Heart left ventricle (tissue), 16 donors: ENCODE measurements at regions of chr11 and their contacts with region 1.

Region 1: DNA sequence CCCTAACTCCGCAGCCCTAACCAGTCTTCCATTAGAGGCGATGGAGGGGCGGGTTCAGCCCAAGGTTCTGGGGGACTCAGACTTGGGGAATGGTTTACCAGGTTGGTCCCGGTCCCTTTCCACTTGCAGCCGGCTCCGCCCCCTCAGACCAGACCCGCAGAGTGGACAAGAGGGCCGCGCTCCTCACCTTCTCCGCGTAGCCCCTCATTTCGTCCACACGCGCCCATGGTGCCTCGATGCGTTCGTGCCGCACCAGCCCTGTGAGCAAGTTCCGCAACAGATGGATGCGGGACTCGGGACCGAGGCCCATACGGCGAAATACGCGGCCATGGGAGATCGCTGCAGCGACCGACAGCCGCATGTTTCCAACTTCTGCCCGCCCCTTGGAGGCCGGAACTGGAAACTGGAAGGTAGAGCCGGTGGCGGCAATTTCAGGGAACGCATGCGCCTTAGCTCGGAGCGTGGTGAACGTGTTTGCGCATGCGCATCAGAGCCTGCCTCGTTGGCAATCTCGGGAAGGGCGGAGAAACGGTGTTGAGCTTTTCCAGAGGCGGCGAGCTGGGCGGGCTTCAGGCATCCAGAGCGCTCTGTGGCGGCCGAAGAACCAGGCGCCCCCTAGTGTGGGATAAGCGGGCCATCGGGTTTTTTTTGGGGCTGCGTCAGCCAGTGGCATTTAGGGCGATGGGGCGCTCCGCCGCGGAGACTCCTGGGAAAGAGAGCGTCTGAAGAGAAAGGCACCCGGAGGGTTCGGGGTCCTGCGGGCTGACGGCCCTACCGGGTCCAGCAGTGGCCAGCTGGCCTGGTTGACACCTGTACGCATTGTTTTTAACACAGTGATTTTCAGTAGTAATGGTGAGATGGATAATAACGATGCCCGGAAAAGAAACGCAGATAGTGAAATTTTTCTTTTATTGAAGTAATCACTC is at the start of gene MRPL17:
- DNase-seq: peak; percentile 99 to 100 (median 100)
- ATAC-seq: peak; percentile 98 to 99 (median 98)
- H3K4me3 ChIP-seq: peak within 1 kb of the TSS; percentile 64 to 96 (median 77)
- H3K27ac ChIP-seq: peak within 1 kb of the TSS; percentile 58 to 97 (median 90)
- H3K4me1 ChIP-seq: peaks cover 4 to 35% (median 19%) of the 10 kb centered on the region in 12 donors
- H3K27me3 ChIP-seq: no peaks in the 10 kb centered on the region
- CTCF ChIP-seq: peak; percentile 84 to 98 (median 92)
- POLR2A ChIP-seq: peak in 1 of 2 donors; percentile 89
- total RNA-seq, gene MRPL17: 31.0 to 58.0 (median 47.7) TPM

Region 2: GRCh38 chr11:6389921-6390724 is 293.1 kb before region 1 on chr11 and contains the start of gene SMPD1:
- intact Hi-C with region 1: loop called in 2 of 10 experiments (anchors 10 kb)
- DNase-seq: peak; percentile 95 to 97 (median 96)
- ATAC-seq: peak; percentile 96 to 98 (median 98)
- H3K4me3 ChIP-seq: peak within 1 kb of the TSS; percentile 62 to 97 (median 82)
- H3K27ac ChIP-seq: peak within 1 kb of the TSS; percentile 60 to 96 (median 90)
- H3K4me1 ChIP-seq: peaks cover 0 to 36% (median 19%) of the 10 kb centered on the region in 12 donors
- H3K27me3 ChIP-seq: no peaks in the 10 kb centered on the region
- CTCF ChIP-seq: no peak
- POLR2A ChIP-seq: peak; percentile 30 to 92
- total RNA-seq, gene SMPD1: 53.8 to 92.3 (median 67.8) TPM

Region 3: DNA sequence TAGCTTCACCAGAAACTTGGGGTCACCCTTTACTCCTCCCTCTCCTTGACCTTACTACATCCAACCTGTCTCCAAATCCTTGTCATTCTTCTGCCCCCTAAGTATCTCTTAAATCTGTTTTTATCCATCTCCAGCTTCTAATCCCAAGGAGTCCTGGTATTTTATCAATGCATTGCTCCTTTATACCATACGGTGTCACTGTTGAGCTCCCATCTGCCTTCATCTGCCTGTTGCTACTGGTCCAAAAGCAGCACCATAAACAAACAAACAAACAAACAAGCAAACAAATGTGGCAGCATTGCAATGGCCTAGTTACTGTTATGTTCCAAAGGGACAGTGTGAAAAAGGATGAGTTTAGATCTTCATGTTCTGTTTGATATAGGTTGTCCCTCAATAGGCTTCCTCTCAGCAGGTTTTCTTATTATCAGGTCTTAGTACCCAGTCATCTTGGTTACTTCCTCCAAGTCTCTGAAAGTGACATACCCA is 151.9 kb before region 1 on chr11:
- intact Hi-C with region 1: loop called in 8 of 10 experiments (anchors 2 to 5 kb)
- DNase-seq: no peak
- ATAC-seq: peak in 3 of 4 donors; percentile 49 to 55 (median 54)
- H3K4me3 ChIP-seq: no peak overlapping the region
- H3K27ac ChIP-seq: no peak overlapping the region
- H3K4me1 ChIP-seq: no peaks in the 10 kb centered on the region
- H3K27me3 ChIP-seq: no peaks in the 10 kb centered on the region
- CTCF ChIP-seq: peak; percentile 65 to 86 (median 79)
- POLR2A ChIP-seq: no peak

Region 4: GRCh38 chr11:6603287-6604080 is 79.7 kb before region 1 on chr11 and contains the starts of genes ILK and RRP8:
- intact Hi-C with region 1: loop called in 3 of 10 experiments (anchors 2 to 5 kb)
- DNase-seq: peak; percentile 94 to 96 (median 95)
- ATAC-seq: peak; percentile 73 to 92 (median 90)
- H3K4me3 ChIP-seq: peak within 1 kb of the TSS; percentile 52 to 97 (median 92)
- H3K27ac ChIP-seq: peak within 1 kb of the TSS; percentile 83 to 99 (median 98)
- H3K4me1 ChIP-seq: peaks cover 17 to 80% (median 58%) of the 10 kb centered on the region in 12 donors
- H3K27me3 ChIP-seq: no peaks in the 10 kb centered on the region
- CTCF ChIP-seq: peak in 8 of 12 donors; percentile 8 to 63 (median 38)
- POLR2A ChIP-seq: peak; percentile 54 to 86
- total RNA-seq, gene ILK: 177 to 259 (median 222) TPM
- total RNA-seq, gene RRP8: 11.2 to 23.5 (median 18.0) TPM

Region 5: GRCh38 chr11:6619004-6619745 is 64.0 kb before region 1 on chr11 and contains the start of gene TPP1:
- intact Hi-C with region 1: loop called in 4 of 10 experiments (anchors 5 kb)
- DNase-seq: peak; percentile 92 to 95 (median 94)
- ATAC-seq: peak; percentile 94 to 98 (median 97)
- H3K4me3 ChIP-seq: peak within 1 kb of the TSS; percentile 37 to 86 (median 68)
- H3K27ac ChIP-seq: peak within 1 kb of the TSS in 11 of 12 donors; percentile 62 to 94 (median 82)
- H3K4me1 ChIP-seq: peaks cover 0 to 45% (median 20%) of the 10 kb centered on the region in 12 donors
- H3K27me3 ChIP-seq: no peaks in the 10 kb centered on the region
- CTCF ChIP-seq: no peak
- POLR2A ChIP-seq: peak in 1 of 2 donors; percentile 74
- total RNA-seq, gene TPP1: 48.7 to 169 (median 81.2) TPM

Region 6: DNA sequence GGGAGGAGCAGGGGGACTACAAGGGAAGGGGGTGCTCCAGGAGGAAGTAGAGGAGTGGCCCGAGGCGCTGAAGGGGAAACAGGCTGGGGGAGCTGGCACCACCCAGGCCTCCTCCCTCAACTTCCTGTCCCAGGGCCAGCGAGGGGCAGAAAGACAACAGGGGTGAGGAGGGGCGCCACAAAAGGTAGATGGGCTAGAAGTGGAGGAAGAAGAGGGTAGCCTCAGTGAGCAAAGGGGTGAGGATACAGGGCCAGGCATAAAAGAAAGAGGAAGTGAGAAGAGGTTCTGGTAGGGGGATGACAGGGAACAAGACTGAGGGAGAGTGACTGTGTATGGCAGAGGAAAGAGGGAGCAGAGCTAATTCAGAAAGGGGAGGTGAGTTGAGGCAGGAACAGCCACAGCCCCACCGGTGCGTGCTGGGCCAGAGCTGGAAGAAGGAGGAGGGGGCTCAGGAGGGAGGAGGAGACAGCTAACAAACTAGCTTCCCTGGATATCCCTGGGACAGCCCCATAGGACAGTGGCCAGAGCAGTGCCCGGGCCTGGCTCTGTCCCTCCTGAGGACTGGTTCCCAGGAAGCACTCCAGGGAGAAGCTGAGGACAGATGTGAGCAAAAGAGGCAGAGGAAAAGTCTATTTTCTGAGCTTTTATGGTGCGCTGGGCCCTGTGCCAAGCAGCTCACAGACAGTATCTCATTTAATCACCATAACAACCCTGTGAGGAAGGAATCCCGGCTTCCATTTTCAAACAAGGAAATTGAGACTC is 36.1 kb before region 1 on chr11:
- intact Hi-C with region 1: loop called in 2 of 10 experiments (anchors 5 kb)
- DNase-seq: peak; percentile 18 to 79 (median 58)
- ATAC-seq: peak; percentile 10 to 45 (median 42)
- H3K4me3 ChIP-seq: peak overlapping the region in 6 of 12 donors; percentile 6 to 39 (median 20)
- H3K27ac ChIP-seq: peak overlapping the region; percentile 59 to 92 (median 84)
- H3K4me1 ChIP-seq: peaks cover 0 to 64% (median 37%) of the 10 kb centered on the region in 12 donors
- H3K27me3 ChIP-seq: peaks cover 0 to 3% (median 0%) of the 10 kb centered on the region in 9 donors
- CTCF ChIP-seq: no peak
- POLR2A ChIP-seq: no peak

Region 7: GRCh38 chr11:6719576-6719975 is 36.4 kb after region 1 on chr11:
- intact Hi-C with region 1: no loop called
- DNase-seq: no peak
- ATAC-seq: peak in 3 of 4 donors; percentile 20 to 56 (median 54)
- H3K4me3 ChIP-seq: no peak overlapping the region
- H3K27ac ChIP-seq: no peak overlapping the region
- H3K4me1 ChIP-seq: peaks cover 0 to 32% (median 0%) of the 10 kb centered on the region in 12 donors
- H3K27me3 ChIP-seq: no peaks in the 10 kb centered on the region
- CTCF ChIP-seq: no peak
- POLR2A ChIP-seq: no peak

Region 8: GRCh38 chr11:6737872-6738466 is 54.8 kb after region 1 on chr11:
- intact Hi-C with region 1: no loop called
- DNase-seq: peak in 1 of 5 donors; percentile 38
- ATAC-seq: peak in 3 of 4 donors; percentile 39 to 68 (median 63)
- H3K4me3 ChIP-seq: no peak overlapping the region
- H3K27ac ChIP-seq: no peak overlapping the region
- H3K4me1 ChIP-seq: peaks cover 0 to 79% (median 0%) of the 10 kb centered on the region in 12 donors
- H3K27me3 ChIP-seq: no peaks in the 10 kb centered on the region
- CTCF ChIP-seq: peak; percentile 55 to 73 (median 63)
- POLR2A ChIP-seq: no peak